HepG2 (cell line): ENCODE measurements at regions of chr3 and their contacts with region 1.

Region 1: GRCh38 chr3:128969993-128970739 is 23.7 kb downstream of the CFAP92 start:
- DNase-seq: peak; percentile 25
- ATAC-seq: peak; percentile 69
- H3K4me3 ChIP-seq: no peak overlapping the region
- H3K27ac ChIP-seq: no peak overlapping the region
- H3K4me1 ChIP-seq: no peaks in the 10 kb centered on the region
- H3K27me3 ChIP-seq: peaks cover 2 to 37% of the 10 kb centered on the region in 2 experiments; a peak in 4 of 5 replicates
- CTCF ChIP-seq: peak; percentile 79
- EP300 ChIP-seq: no peak
- POLR2A ChIP-seq: no peak
- RAD21 ChIP-seq: peak; percentile 60

Region 2: DNA sequence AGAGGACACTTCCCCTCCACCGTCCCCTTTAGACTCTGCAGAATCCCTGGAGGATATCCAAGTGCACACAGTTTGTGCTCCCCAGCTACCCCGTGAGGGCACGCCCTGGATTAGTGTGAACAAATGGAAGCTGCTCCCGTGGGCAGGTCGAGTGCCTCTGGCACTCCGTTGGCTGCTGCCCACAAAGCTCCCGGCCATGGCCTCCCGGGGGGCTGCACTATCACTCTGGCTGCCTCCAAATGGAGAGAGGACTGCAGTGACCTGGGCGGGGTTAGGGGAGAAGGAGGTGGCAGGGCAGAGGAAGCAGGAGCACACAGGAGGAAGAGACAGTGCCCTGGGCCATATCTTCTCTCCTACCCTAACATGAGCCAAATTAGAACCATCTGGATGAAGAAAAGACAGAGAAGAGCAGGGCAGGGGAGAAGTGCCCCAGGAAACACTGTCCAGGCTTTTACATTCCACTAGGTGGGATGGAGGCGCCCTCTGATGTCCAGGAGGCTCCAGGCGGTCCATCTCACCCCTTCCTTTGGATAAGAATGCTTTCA is 120.2 kb before region 1 on chr3:
- CTCF ChIA-PET with region 1: no interaction called
- POLR2A ChIA-PET with region 1: no interaction called
- in situ Hi-C with region 1: no loop called
- intact Hi-C with region 1: no loop called
- DNase-seq: no peak
- ATAC-seq: 0 out of 3 replicates have a peak, but pooled peaks have one; percentile 7
- H3K4me3 ChIP-seq: no peak overlapping the region; a peak in 1 of 6 replicates
- H3K27ac ChIP-seq: no peak overlapping the region
- H3K4me1 ChIP-seq: peaks cover 23% of the 10 kb centered on the region
- H3K27me3 ChIP-seq: peaks cover 0 to 2% of the 10 kb centered on the region in 2 experiments; a peak in 2 of 5 replicates
- CTCF ChIP-seq: peak; percentile 41
- EP300 ChIP-seq: no peak
- POLR2A ChIP-seq: no peak
- RAD21 ChIP-seq: no peak

Region 3: GRCh38 chr3:129016356-129016719 is 46.2 kb after region 1 on chr3:
- CTCF ChIA-PET with region 1: no interaction called
- POLR2A ChIA-PET with region 1: no interaction called
- in situ Hi-C with region 1: no loop called
- intact Hi-C with region 1: loop called (anchors 1 kb)
- DNase-seq: peak; percentile 39
- ATAC-seq: peak; percentile 78
- H3K4me3 ChIP-seq: no peak overlapping the region
- H3K27ac ChIP-seq: no peak overlapping the region
- H3K4me1 ChIP-seq: peaks cover 32% of the 10 kb centered on the region
- H3K27me3 ChIP-seq: peaks cover 2 to 48% of the 10 kb centered on the region in 2 experiments; a peak in 4 of 5 replicates
- CTCF ChIP-seq: peak; percentile 15
- EP300 ChIP-seq: no peak
- POLR2A ChIP-seq: no peak
- RAD21 ChIP-seq: no peak

Region 4: DNA sequence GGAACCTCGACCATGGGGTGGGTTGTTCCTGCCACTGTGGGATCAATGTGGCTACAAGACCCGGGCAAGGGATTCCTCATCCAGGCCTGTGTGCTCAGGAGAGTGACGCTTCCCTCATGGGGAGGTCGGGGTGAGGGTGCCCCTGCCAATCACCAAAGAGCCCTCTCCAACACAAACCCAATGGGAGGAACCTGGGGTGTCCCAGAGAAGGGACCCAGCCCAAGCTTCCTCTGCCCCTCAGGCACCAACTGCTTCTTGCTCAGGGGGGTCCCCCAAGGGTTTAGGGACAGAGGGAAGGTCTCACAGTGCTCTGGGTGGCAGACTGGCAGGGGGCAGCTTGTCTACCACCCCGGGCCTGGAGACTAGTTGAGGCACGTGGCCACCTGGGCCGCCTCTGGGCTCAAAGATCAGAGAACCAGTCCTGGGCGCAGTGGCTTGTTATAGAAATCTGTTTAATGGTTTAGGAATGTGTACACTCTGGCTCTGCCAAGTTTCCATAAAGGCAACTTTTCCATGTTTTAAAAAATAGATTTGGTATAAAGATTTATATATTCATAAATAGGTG is 117.1 kb after region 1 on chr3:
- CTCF ChIA-PET with region 1: interaction called, 4 read pairs
- POLR2A ChIA-PET with region 1: no interaction called
- in situ Hi-C with region 1: loop called (anchors 10 kb)
- intact Hi-C with region 1: loop called (anchors 5 kb)
- DNase-seq: peak; percentile 51
- ATAC-seq: peak; percentile 5; the same call in 2 of the 3 replicates
- H3K4me3 ChIP-seq: peak overlapping the region in 1 of 3 experiments; percentile 30; a peak in 1 of 6 replicates
- H3K27ac ChIP-seq: no peak overlapping the region
- H3K4me1 ChIP-seq: peaks cover 24% of the 10 kb centered on the region
- H3K27me3 ChIP-seq: no peaks in the 10 kb centered on the region
- CTCF ChIP-seq: no peak
- EP300 ChIP-seq: no peak
- POLR2A ChIP-seq: no peak
- RAD21 ChIP-seq: no peak

Region 5: GRCh38 chr3:129101370-129102138 is 131.4 kb after region 1 on chr3:
- CTCF ChIA-PET with region 1: no interaction called
- POLR2A ChIA-PET with region 1: no interaction called
- in situ Hi-C with region 1: no loop called
- intact Hi-C with region 1: no loop called
- DNase-seq: no peak
- ATAC-seq: no peak
- H3K4me3 ChIP-seq: no peak overlapping the region
- H3K27ac ChIP-seq: no peak overlapping the region
- H3K4me1 ChIP-seq: peaks cover 9% of the 10 kb centered on the region; the same call in 1 of the 2 replicates
- H3K27me3 ChIP-seq: no peaks in the 10 kb centered on the region
- CTCF ChIP-seq: no peak
- EP300 ChIP-seq: no peak
- POLR2A ChIP-seq: no peak
- RAD21 ChIP-seq: no peak